HEK293 (cell line): ENCODE measurements at regions of chr9 and their contacts with region 1.

Region 1: GRCh38 chr9:130315446-130316226 is 50.1 kb downstream of the HMCN2 start:
- H3K4me3 ChIP-seq: no peak overlapping the region
- H3K27ac ChIP-seq: no peak overlapping the region
- H3K4me1 ChIP-seq: no peaks in the 10 kb centered on the region
- CTCF ChIP-seq: no peak

Region 2: DNA sequence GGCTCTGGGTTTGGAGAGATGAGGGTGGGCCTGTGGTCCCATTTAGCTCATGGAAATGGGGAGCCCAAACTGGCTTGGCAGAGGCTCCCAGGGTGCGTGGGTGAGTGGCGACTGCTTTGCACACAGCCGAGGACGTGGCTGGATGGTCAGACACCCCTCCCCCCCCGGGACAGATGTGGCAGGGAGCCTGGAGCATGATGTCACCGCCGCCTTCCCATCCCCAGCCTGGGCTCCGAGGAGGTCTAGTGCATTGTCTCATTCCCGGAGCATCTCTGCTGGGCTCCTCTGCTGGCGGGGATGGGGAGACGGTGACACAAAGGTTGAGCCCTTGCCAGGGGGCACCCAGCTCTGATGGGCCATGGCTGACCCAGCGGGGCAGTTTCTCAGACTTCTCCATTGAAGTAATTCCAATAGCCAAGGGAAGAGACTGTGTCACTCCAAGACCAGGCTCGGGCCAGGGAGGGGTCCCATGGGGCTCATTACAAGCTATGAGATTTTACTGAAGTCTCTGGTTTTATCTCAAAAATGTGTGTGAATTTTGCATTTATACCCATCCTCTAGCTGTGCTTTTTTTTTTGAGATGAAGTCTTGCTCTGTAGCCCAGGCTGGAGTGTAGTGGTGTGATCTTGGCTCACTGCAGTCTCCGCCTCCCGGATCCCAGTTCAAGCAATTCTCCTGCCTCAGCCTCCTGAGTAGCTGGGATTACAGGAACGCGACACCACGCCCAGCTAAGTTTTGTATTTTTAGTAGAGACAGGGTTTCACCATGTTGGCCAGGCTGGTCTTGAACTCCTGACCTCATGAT is 14.0 kb before region 1 on chr9:
- CTCF ChIA-PET with region 1: interaction called, 18 read pairs
- POLR2A ChIA-PET with region 1: no interaction called
- H3K4me3 ChIP-seq: no peak overlapping the region
- H3K27ac ChIP-seq: no peak overlapping the region
- H3K4me1 ChIP-seq: no peaks in the 10 kb centered on the region
- CTCF ChIP-seq: no peak

Region 3: DNA sequence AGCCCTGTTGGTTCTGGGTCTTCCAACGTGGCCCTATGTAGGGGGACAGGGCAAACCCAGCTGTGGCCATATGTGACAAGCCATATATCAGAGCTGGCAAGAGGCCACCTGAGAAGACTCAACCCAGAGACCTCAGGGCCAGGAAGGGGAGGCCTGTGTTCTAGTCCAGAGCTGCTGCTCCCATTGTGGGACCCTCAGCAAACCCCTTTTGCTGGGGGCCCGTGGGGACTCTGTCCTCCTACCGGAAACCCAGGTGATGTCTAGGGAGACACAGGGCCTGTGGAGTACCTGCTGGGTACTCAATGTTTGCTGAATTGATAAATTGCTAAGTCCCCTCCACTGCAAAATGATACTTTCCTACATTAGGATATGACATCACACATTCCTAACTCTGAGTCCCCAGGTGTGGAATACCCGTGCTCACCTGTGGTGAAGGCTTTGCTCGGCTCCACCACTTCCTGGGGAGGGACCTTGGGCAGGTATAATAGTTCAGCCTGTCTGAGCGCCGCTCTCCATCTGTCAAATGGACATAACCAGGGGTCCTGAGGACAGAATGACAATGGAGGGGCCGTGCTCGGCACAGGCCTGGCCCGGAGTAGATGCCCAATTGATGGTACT is 90.8 kb after region 1 on chr9:
- CTCF ChIA-PET with region 1: no interaction called
- POLR2A ChIA-PET with region 1: no interaction called
- H3K4me3 ChIP-seq: no peak overlapping the region
- H3K27ac ChIP-seq: no peak overlapping the region
- H3K4me1 ChIP-seq: no peaks in the 10 kb centered on the region
- CTCF ChIP-seq: no peak

Region 4: DNA sequence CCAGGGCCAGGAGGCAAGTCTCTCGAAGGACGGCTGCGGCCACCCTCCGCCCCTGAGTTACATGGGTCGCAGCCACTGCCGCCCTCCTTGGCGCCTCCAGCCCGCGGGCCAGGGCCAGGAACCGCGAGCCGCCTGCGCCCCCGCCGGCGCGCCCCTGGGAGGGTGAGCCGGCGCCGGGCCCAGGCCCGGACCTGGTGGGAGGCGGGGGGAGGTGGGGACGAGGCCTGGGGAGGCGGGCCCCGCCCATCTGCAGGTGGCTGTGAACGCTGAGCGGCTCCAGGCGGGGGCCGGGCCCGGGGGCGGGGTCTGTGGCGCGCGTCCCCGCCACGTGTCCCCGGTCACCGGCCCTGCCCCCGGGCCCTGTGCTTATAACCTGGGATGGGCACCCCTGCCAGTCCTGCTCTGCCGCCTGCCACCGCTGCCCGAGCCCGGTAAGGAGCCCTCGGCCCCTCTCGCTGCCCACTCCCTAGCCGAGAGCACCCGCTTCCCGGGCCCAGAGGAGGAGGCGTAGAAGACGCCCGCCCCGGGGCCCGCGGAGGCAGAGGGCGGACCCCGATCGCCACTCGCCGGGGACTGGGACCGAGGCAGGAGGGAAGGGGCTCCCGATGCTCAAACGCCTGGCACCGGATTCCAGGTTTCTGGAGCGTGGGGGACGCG is 129.1 kb after region 1 on chr9 and contains the start of gene ASS1:
- CTCF ChIA-PET with region 1: no interaction called
- POLR2A ChIA-PET with region 1: no interaction called
- H3K4me3 ChIP-seq: peak within 1 kb of the TSS; percentile 38
- H3K27ac ChIP-seq: peak within 1 kb of the TSS; percentile 57; the same call in 1 of the 2 replicates
- H3K4me1 ChIP-seq: peaks cover 5% of the 10 kb centered on the region
- CTCF ChIP-seq: no peak

Region 5: GRCh38 chr9:130454812-130455368 is 139.3 kb after region 1 on chr9:
- CTCF ChIA-PET with region 1: no interaction called
- POLR2A ChIA-PET with region 1: no interaction called
- H3K4me3 ChIP-seq: no peak overlapping the region
- H3K27ac ChIP-seq: no peak overlapping the region
- H3K4me1 ChIP-seq: peaks cover 2% of the 10 kb centered on the region; the same call in 1 of the 2 replicates
- CTCF ChIP-seq: no peak